T-cell (primary cell): ENCODE measurements at regions of chr20 and their contacts with region 1.

Region 1: DNA sequence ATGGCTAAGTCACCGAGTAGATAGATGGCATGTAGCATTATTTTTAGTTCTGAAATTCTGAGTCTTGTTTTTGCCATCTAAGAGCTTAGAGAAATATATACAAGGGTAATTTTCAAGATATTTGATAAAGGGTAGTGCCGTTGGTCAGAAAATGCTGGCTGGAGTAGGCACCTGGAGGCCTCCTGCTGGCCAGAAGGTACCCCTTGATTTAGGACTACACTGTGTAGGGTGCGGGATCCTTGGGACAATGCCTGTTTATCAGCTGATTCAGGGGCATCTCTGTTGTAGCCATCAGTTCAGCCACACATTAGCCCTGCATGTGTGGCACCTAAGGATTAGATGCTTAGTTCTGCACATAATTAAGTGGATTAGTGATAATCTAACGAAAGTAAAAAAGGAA is 12.6 kb downstream of the KAT14 start:
- DNase-seq: no peak
- ATAC-seq: no peak
- H3K4me3 ChIP-seq: no peak overlapping the region
- H3K4me3 Mint-ChIP-seq: no peak overlapping the region
- H3K27ac ChIP-seq: no peak overlapping the region
- H3K27ac Mint-ChIP-seq: no peak overlapping the region
- H3K4me1 ChIP-seq: no peaks in the 10 kb centered on the region
- H3K4me1 Mint-ChIP-seq: peaks cover 3 to 11% (median 5%) of the 10 kb centered on the region in 3 donors
- H3K27me3 ChIP-seq: no peaks in the 10 kb centered on the region
- H3K27me3 Mint-ChIP-seq: no peaks in the 10 kb centered on the region

Region 2: GRCh38 chr20:18103497-18103896 is 46.8 kb before region 1 on chr20:
- CTCF ChIA-PET with region 1: no interaction called
- POLR2A ChIA-PET with region 1: no interaction called
- DNase-seq: no peak
- ATAC-seq: no peak
- H3K4me3 ChIP-seq: no peak overlapping the region
- H3K4me3 Mint-ChIP-seq: no peak overlapping the region
- H3K27ac ChIP-seq: no peak overlapping the region
- H3K27ac Mint-ChIP-seq: no peak overlapping the region
- H3K4me1 ChIP-seq: no peaks in the 10 kb centered on the region
- H3K4me1 Mint-ChIP-seq: no peaks in the 10 kb centered on the region
- H3K27me3 ChIP-seq: peaks cover 0 to 9% of the 10 kb centered on the region in 2 experiments
- H3K27me3 Mint-ChIP-seq: peaks cover 7 to 26% of the 10 kb centered on the region in 2 donors

Region 3: GRCh38 chr20:18481596-18481995 is 331.3 kb after region 1 on chr20:
- CTCF ChIA-PET with region 1: no interaction called
- POLR2A ChIA-PET with region 1: interaction called in 1 of 2 experiments, 11 read pairs
- DNase-seq: no peak
- ATAC-seq: no peak
- H3K4me3 ChIP-seq: no peak overlapping the region
- H3K4me3 Mint-ChIP-seq: no peak overlapping the region
- H3K27ac ChIP-seq: no peak overlapping the region
- H3K27ac Mint-ChIP-seq: no peak overlapping the region
- H3K4me1 ChIP-seq: no peaks in the 10 kb centered on the region
- H3K4me1 Mint-ChIP-seq: no peaks in the 10 kb centered on the region
- H3K27me3 ChIP-seq: no peaks in the 10 kb centered on the region
- H3K27me3 Mint-ChIP-seq: no peaks in the 10 kb centered on the region